ENCODE measurements at regions of chr1 and their contacts with region 1.

Region 1: GRCh38 chr1:15799004-15799936 is 8.2 kb downstream of the UQCRHL start:
- DNase-seq: peak; percentile 81 to 95
- H3K4me3 ChIP-seq: no peak overlapping the region
- H3K27ac ChIP-seq: peak overlapping the region; percentile 84 to 90
- H3K4me1 ChIP-seq: peaks cover 16 to 66% of the 10 kb centered on the region in 2 donors
- H3K27me3 ChIP-seq: no peaks in the 10 kb centered on the region
- CTCF ChIP-seq: no peak

Region 2: DNA sequence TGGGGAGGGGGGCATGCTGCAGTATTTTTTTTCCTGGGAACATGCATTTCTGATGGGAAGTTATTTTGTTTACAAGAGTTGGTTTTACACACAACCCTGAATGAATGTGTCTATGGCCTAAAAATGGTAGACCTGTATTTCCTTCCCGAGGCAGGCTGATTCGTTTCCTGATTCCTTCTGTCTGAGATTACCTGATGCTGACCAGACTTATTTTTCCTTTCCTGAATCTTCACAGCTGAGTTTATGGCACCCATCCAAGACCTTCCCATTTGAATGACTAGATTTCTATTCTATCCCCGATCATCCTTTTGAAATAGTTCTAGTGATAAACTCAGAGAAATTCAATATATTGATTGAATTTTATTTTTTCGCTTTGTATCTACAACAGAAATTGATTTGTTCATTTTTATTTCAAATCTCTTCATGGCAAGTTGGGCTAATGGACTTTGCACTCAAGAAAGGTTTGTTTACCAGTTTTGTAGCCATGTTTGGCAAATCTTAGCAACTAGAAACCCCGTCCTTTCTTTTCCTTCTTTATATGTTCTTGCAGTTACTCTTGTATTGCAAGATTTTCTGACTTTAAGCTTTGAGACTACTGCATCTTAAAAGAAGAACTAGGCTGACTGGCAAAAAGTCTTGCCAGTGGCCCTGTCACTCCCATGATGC is 131.0 kb before region 1 on chr1:
- intact Hi-C with region 1: no loop called
- DNase-seq: no peak
- H3K4me3 ChIP-seq: no peak overlapping the region
- H3K27ac ChIP-seq: no peak overlapping the region
- H3K4me1 ChIP-seq: no peaks in the 10 kb centered on the region
- H3K27me3 ChIP-seq: no peaks in the 10 kb centered on the region
- CTCF ChIP-seq: no peak

Region 3: GRCh38 chr1:15703562-15703961 is 95.7 kb before region 1 on chr1:
- intact Hi-C with region 1: no loop called
- DNase-seq: peak; percentile 79 to 94
- H3K4me3 ChIP-seq: peak overlapping the region; percentile 3 to 12
- H3K27ac ChIP-seq: peak overlapping the region; percentile 84 to 91
- H3K4me1 ChIP-seq: peaks cover 16 to 26% of the 10 kb centered on the region in 2 donors
- H3K27me3 ChIP-seq: no peaks in the 10 kb centered on the region
- CTCF ChIP-seq: no peak

Region 4: GRCh38 chr1:15835741-15836510 is 36.7 kb after region 1 on chr1:
- intact Hi-C with region 1: loop called (anchors 1 kb)
- DNase-seq: peak; percentile 97 to 100
- H3K4me3 ChIP-seq: peak overlapping the region; percentile 79 to 95
- H3K27ac ChIP-seq: peak overlapping the region; percentile 100
- H3K4me1 ChIP-seq: peaks cover 0 to 30% of the 10 kb centered on the region in 2 donors
- H3K27me3 ChIP-seq: no peaks in the 10 kb centered on the region
- CTCF ChIP-seq: no peak

Region 5: GRCh38 chr1:15847100-15847892 is 48.0 kb after region 1 on chr1 and contains the start of gene SPEN:
- intact Hi-C with region 1: loop called (anchors 5 kb)
- DNase-seq: peak; percentile 93 to 99
- H3K4me3 ChIP-seq: peak within 1 kb of the TSS; percentile 98 to 100
- H3K27ac ChIP-seq: peak within 1 kb of the TSS; percentile 96 to 99
- H3K4me1 ChIP-seq: peaks cover 7 to 38% of the 10 kb centered on the region in 2 donors
- H3K27me3 ChIP-seq: no peaks in the 10 kb centered on the region
- CTCF ChIP-seq: no peak
- total RNA-seq, gene SPEN: 53.9 TPM

Region 6: GRCh38 chr1:15885701-15886610 is 86.7 kb after region 1 on chr1:
- intact Hi-C with region 1: loop called (anchors 5 kb)
- DNase-seq: peak; percentile 98 to 99
- H3K4me3 ChIP-seq: peak overlapping the region; percentile 54 to 61
- H3K27ac ChIP-seq: peak overlapping the region; percentile 86 to 91
- H3K4me1 ChIP-seq: peaks cover 9 to 71% of the 10 kb centered on the region in 2 donors
- H3K27me3 ChIP-seq: no peaks in the 10 kb centered on the region
- CTCF ChIP-seq: no peak

Region 7: GRCh38 chr1:15949453-15950245 is 150.4 kb after region 1 on chr1:
- intact Hi-C with region 1: loop called (anchors 1 kb)
- DNase-seq: peak; percentile 97 to 99
- H3K4me3 ChIP-seq: peak overlapping the region; percentile 12 to 51
- H3K27ac ChIP-seq: peak overlapping the region; percentile 96 to 98
- H3K4me1 ChIP-seq: peaks cover 55 to 66% of the 10 kb centered on the region in 2 donors
- H3K27me3 ChIP-seq: no peaks in the 10 kb centered on the region
- CTCF ChIP-seq: no peak

Region 8: GRCh38 chr1:16017461-16018303 is 218.4 kb after region 1 on chr1 and contains the start of gene HSPB7:
- intact Hi-C with region 1: loop called (anchors 5 kb)
- DNase-seq: peak; percentile 65 to 95
- H3K4me3 ChIP-seq: peak within 1 kb of the TSS; percentile 51 to 74
- H3K27ac ChIP-seq: peak within 1 kb of the TSS; percentile 95 to 98
- H3K4me1 ChIP-seq: peaks cover 20 to 58% of the 10 kb centered on the region in 2 donors
- H3K27me3 ChIP-seq: no peaks in the 10 kb centered on the region
- CTCF ChIP-seq: no peak
- total RNA-seq, gene HSPB7: 191 TPM

Region 9: GRCh38 chr1:16146279-16147155 is 347.2 kb after region 1 on chr1:
- intact Hi-C with region 1: loop called (anchors 5 kb)
- DNase-seq: peak in 1 of 2 donors; percentile 89
- H3K4me3 ChIP-seq: peak overlapping the region; percentile 46 to 59
- H3K27ac ChIP-seq: peak overlapping the region; percentile 84 to 94
- H3K4me1 ChIP-seq: peaks cover 13 to 53% of the 10 kb centered on the region in 2 donors
- H3K27me3 ChIP-seq: no peaks in the 10 kb centered on the region
- CTCF ChIP-seq: no peak